PC-9 (cell line): ENCODE measurements at regions of chr3 and their contacts with region 1.

Region 1: GRCh38 chr3:23776352-23776891 is 29.3 kb upstream of the UBE2E1 start:
- DNase-seq: no peak
- H3K4me3 ChIP-seq: no peak overlapping the region
- H3K27ac ChIP-seq: no peak overlapping the region
- H3K4me1 ChIP-seq: no peaks in the 10 kb centered on the region
- H3K27me3 ChIP-seq: no peaks in the 10 kb centered on the region
- CTCF ChIP-seq: no peak

Region 2: DNA sequence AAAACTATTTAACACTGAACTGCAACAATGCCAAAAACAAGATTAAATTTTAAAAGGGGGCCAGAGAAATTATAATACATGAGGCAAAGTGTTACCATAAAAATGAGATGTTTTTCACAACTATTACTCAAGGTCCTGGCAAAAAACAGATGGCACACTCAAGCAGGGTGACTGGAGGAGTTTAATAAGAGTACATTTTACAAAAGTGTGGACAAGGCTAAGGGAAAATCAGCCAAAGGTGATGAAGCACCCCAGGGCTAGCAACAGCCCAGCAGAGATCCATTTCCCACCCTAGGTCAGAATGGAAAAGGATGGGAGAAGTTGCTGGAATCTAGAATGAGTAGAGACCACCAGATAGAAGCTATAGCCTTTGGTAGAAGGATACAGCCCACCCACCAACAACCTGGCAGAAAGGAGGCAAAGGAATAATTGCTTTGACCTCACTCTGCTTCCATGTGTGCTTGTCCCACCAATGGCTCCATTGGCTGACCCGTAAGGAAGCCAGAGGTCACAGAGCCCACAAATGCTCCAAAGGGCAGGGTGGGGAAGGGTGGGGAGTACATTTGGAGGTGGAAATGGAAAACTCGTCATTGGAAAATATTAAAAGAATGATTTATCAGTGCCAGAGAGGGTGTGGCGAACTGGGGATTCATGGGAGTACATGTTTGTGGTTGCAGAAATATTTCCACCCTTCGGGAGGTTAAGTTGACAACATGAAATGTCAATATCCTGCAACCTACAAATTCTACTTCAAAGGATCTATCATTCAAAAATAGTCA is 734.3 kb before region 1 on chr3:
- CTCF ChIA-PET with region 1: no interaction called
- POLR2A ChIA-PET with region 1: interaction called, 11 read pairs
- intact Hi-C with region 1: no loop called
- DNase-seq: peak; percentile 43 to 48
- H3K4me3 ChIP-seq: no peak overlapping the region
- H3K27ac ChIP-seq: no peak overlapping the region
- H3K4me1 ChIP-seq: peaks cover 13% of the 10 kb centered on the region; the same call in 1 of the 2 replicates
- H3K27me3 ChIP-seq: no peaks in the 10 kb centered on the region
- CTCF ChIP-seq: no peak

Region 3: GRCh38 chr3:23421811-23422516 is 354.5 kb before region 1 on chr3:
- CTCF ChIA-PET with region 1: no interaction called
- POLR2A ChIA-PET with region 1: no interaction called
- intact Hi-C with region 1: no loop called
- DNase-seq: no peak
- H3K4me3 ChIP-seq: no peak overlapping the region
- H3K27ac ChIP-seq: no peak overlapping the region
- H3K4me1 ChIP-seq: no peaks in the 10 kb centered on the region
- H3K27me3 ChIP-seq: no peaks in the 10 kb centered on the region
- CTCF ChIP-seq: no peak

Region 4: GRCh38 chr3:23492057-23492456 is 284.4 kb before region 1 on chr3:
- CTCF ChIA-PET with region 1: no interaction called
- POLR2A ChIA-PET with region 1: interaction called, 11 read pairs
- intact Hi-C with region 1: no loop called
- DNase-seq: no peak
- H3K4me3 ChIP-seq: no peak overlapping the region
- H3K27ac ChIP-seq: no peak overlapping the region
- H3K4me1 ChIP-seq: peaks cover 36% of the 10 kb centered on the region
- H3K27me3 ChIP-seq: no peaks in the 10 kb centered on the region
- CTCF ChIP-seq: no peak

Region 5: DNA sequence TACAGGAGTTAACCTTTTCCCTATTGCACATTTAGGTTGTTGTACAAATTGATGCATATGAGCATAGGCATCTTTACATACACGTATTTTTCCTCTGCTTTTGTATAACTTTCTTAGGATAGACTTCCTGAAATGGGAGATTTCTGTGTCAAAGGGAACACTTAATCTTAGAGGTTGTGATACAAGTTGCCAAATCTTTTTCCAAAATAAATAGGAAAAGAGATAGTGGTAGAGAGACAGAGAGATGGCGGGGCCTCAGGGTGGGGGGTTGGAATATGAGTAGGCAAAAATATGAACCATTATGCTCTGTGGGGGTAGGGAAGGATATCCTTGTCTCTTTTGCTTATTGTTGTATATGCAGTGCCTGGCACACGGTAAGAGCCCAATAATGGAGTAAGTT is 41.4 kb before region 1 on chr3:
- CTCF ChIA-PET with region 1: no interaction called
- POLR2A ChIA-PET with region 1: interaction called, 10 read pairs
- intact Hi-C with region 1: no loop called
- DNase-seq: peak in 1 of 2 experiments; percentile 67
- H3K4me3 ChIP-seq: peak overlapping the region; percentile 31; the same call in 1 of the 2 replicates
- H3K27ac ChIP-seq: peak overlapping the region; percentile 94
- H3K4me1 ChIP-seq: peaks cover 81% of the 10 kb centered on the region
- H3K27me3 ChIP-seq: no peaks in the 10 kb centered on the region
- CTCF ChIP-seq: no peak

Region 6: DNA sequence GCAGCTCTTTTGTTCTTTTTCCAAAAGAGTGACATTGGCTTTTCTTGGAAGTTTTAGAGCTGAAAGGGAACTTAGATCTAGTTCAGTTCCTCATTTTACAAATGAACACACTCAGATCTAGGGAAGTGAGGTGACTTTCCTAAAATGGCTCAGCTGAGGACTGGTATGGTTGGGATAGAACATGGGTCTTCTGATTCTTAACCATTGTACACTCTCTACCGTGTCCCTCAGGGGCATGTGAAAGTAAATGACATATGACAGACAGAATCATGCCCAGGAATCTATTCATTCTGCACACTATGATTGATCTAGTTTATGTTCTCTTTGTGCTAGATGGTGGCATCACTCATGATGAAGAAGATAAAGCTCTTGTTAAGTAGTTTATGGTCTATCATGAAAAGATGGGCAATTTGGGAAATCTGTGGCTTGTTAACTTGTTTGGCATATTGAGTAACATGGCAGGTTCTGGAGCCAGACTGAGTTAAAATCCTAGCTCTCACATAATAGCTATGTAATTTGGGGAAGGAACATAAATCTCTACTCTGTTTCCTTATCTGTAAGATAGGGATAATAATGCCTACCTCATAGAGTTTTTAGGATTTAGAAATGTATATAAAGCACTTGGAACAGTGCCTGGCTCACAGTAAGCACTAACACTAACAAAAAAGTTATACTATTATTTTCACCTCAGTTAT is 60.3 kb after region 1 on chr3:
- CTCF ChIA-PET with region 1: interaction called, 13 read pairs
- POLR2A ChIA-PET with region 1: no interaction called
- intact Hi-C with region 1: no loop called
- DNase-seq: no peak
- H3K4me3 ChIP-seq: no peak overlapping the region
- H3K27ac ChIP-seq: peak overlapping the region; percentile 7; the same call in 1 of the 2 replicates
- H3K4me1 ChIP-seq: no peaks in the 10 kb centered on the region
- H3K27me3 ChIP-seq: no peaks in the 10 kb centered on the region
- CTCF ChIP-seq: no peak

Region 7: DNA sequence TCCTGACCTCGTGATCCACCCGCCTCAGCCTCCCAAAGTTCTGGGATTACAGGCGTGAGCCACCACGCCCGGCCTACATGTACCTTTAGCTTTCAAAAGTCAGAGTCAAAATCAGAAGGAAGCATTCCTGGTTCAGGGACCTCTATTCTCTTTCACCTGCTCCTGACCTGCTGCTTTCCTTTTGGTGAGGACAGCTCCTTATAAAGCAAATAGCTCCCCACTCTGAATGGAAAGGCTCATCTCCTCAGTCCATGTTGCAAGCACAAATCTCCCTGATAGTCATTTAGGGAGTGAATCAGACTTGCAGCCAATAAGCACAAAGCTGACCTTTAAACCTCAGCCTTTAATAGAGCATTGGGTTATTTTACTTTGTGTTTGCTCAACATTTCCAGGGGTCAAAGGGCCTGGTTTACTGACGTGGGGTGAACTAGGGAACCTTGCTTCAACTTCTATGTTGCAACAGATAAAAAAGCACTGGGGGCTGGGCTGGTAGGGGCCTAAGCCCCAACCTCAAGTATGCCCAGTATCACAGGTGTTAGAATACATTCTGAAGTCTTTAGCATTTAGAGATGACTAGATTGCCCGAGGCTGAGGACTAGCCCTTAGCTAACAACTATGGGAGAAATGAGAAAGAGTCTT is 675.2 kb after region 1 on chr3:
- CTCF ChIA-PET with region 1: interaction called, 13 read pairs
- POLR2A ChIA-PET with region 1: no interaction called
- intact Hi-C with region 1: no loop called
- DNase-seq: peak; percentile 37 to 91
- H3K4me3 ChIP-seq: 0 out of 2 replicates have a peak overlapping the region, but pooled peaks have one; percentile 27
- H3K27ac ChIP-seq: peak overlapping the region; percentile 80
- H3K4me1 ChIP-seq: peaks cover 57% of the 10 kb centered on the region
- H3K27me3 ChIP-seq: no peaks in the 10 kb centered on the region
- CTCF ChIP-seq: no peak